ENCODE measurements at regions of chr6 and their contacts with region 1.

Region 1: GRCh38 chr6:47603995-47604394 is 94.4 kb upstream of the ADGRF4 start:
- DNase-seq: no peak
- H3K4me3 ChIP-seq: no peak overlapping the region
- H3K27ac ChIP-seq: no peak overlapping the region
- H3K27me3 ChIP-seq: no peaks in the 10 kb centered on the region
- CTCF ChIP-seq: no peak

Region 2: DNA sequence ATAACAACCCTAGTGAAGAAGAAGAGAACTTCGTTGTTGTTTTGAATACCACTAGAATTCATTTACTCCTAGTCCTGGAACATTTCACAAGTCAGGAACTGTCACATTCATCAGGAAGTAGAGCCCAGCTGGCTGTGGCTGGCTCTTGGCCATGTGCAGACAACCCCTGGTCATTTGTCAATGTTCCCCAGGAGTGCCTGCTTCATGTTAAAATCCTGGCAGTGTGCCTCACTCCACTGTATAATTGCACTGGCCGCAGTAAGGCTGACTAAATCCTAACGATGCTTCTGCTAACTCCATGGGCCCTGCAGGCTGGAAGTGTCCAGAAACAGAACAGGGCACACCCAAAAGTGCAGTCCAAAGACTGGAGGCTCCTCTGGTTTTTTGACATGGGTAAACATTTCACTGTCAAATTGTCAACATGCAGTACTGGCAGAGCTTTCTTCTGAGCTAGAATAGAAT is 520.4 kb before region 1 on chr6:
- CTCF ChIA-PET with region 1: interaction called, 11 read pairs
- POLR2A ChIA-PET with region 1: no interaction called
- DNase-seq: peak; percentile 38
- H3K4me3 ChIP-seq: no peak overlapping the region
- H3K27ac ChIP-seq: no peak overlapping the region
- H3K27me3 ChIP-seq: peaks cover 4% of the 10 kb centered on the region
- CTCF ChIP-seq: no peak

Measured in AG04450 (cell line).